Activated CD4-positive, alpha-beta memory T cell treated with anti-CD3 and anti-CD28 coated beads for 36 hours (primary cell): ENCODE measurements at regions of chr1 and their contacts with region 1.

Region 1: DNA sequence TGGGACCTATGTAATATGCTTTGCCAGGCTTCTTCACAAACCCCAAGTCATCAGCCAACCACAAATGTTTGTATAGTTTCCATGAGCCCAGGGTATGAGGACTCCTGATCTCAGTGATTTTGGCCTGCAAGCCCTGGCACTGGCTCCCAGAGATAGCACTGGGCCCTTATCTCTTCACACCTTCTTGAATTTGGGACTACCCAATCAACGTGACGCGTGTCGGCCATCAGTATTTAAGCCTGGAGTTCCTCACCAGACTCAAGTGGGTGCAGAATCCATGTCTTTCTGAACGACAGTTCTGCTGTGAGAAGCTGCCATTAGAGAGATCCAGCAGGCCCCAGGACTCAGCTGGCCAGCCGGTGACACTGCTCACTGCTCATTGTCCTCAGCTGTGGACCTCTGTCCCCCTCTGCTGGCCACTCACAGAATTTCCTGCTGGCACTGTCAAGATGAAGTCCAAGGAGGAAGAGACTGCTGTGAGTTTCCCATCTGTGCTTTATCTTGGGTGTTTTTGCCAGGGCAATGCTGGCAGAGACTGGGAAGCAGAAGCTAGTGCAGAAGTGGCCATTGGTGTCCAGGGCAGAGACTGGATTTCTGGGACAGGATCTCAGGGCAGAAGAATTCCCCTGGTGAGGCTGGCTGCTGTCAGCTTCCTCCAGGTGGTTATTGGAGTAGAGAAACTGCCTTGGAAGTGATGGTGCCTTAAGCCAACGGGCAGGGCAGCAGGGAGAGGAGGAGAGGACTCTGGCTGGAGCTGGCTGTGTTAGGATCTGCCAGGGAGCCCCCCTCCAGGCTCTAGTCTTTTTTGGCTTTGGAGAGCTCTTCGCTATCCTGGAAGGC is 28.4 kb downstream of the TMCC2 start:
- DNase-seq: peak; percentile 92
- H3K4me3 Mint-ChIP-seq: no peak overlapping the region
- H3K27ac Mint-ChIP-seq: no peak overlapping the region
- H3K4me1 Mint-ChIP-seq: no peaks in the 10 kb centered on the region
- H3K27me3 Mint-ChIP-seq: peaks cover 4% of the 10 kb centered on the region

Region 2: GRCh38 chr1:204868340-204868700 is 387.8 kb before region 1 on chr1:
- CTCF ChIA-PET with region 1: no interaction called
- POLR2A ChIA-PET with region 1: no interaction called
- intact Hi-C with region 1: no loop called
- DNase-seq: no peak
- H3K4me3 Mint-ChIP-seq: no peak overlapping the region
- H3K27ac Mint-ChIP-seq: no peak overlapping the region
- H3K4me1 Mint-ChIP-seq: no peaks in the 10 kb centered on the region
- H3K27me3 Mint-ChIP-seq: peaks cover 16% of the 10 kb centered on the region

Region 3: DNA sequence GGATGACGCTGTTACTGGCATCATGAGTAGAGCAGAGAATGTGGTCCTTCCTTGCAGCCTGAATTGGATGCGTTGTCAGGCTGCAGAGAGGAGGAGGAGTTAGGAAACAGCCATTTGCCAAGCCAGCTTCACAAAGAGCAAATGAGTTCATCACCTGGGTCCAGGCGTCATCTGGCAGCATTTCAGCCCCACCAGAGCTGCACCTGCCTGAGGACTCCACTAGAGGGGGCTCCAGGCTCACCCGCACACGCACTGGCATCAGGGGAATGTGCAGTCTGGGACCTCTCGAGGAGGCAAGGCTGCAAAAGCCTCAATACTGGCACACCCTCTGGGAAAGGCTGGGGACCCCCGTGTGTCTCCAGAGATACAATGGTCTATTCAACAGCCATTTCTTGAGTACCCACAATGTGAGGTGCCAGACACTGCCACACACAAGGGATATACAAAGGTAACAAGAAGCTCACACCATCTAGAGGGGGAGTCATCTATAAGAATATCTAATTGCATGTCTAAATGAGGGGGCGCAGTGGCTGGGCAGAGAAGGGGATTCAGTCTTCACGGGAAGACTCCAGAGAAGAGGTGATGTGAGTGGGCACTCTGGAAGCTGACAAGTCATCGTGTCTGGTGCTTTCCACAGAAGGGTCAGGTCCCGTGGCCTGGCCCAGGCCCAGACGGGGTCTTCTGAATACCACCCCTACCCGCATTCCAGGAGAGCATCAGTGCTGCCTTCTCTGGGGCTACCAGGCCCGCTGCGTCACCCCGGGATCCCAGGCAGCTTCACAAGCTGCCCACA is 266.7 kb before region 1 on chr1:
- CTCF ChIA-PET with region 1: interaction called, 22 read pairs
- POLR2A ChIA-PET with region 1: no interaction called
- intact Hi-C with region 1: loop called (anchors 5 kb)
- DNase-seq: peak; percentile 75
- H3K4me3 Mint-ChIP-seq: no peak overlapping the region
- H3K27ac Mint-ChIP-seq: no peak overlapping the region
- H3K4me1 Mint-ChIP-seq: peaks cover 7% of the 10 kb centered on the region
- H3K27me3 Mint-ChIP-seq: peaks cover 2% of the 10 kb centered on the region

Region 4: DNA sequence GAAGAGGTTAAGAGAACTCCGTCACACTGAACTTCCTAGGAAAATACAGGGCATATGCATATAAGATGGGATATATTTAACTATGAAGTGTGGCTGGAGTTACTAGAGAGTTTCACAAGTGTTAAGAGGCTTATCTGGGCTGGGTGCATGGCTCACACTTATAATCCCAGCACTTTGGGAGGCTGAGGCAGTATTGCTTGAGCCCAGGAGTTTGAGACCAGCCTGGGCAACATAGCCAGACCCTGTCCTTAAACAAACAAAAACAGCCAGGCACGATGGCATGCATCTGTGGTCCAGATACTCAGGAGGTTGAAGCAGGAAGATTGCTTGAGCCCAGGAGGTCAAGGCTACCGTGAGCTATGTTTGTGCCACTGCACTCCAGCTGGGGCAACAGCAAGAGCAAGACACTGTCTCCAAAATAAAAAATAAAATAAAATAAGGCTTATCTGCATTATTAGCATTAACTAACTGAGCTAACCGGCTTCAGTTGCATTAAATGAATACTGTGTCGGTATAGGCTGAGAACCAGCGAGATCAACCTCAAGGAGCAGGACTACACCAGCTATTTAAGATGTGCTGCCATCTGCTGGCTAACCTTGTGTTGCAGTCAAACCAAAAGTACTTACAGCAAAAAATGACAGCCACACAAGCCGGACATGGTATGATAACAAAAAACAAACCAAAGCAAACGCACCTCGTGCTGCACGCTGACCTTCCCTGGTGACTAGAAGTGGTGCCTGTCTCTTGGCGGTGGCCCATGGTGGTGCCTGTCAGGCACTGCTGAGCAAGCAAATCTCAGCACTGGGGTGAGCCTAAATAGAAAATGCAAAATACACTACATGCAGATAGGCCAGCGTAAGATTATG is 114.7 kb before region 1 on chr1:
- CTCF ChIA-PET with region 1: interaction called, 40 read pairs
- POLR2A ChIA-PET with region 1: no interaction called
- intact Hi-C with region 1: loop called (anchors 5 kb)
- DNase-seq: peak; percentile 83
- H3K4me3 Mint-ChIP-seq: no peak overlapping the region
- H3K27ac Mint-ChIP-seq: no peak overlapping the region
- H3K4me1 Mint-ChIP-seq: peaks cover 4% of the 10 kb centered on the region
- H3K27me3 Mint-ChIP-seq: no peaks in the 10 kb centered on the region

Region 5: DNA sequence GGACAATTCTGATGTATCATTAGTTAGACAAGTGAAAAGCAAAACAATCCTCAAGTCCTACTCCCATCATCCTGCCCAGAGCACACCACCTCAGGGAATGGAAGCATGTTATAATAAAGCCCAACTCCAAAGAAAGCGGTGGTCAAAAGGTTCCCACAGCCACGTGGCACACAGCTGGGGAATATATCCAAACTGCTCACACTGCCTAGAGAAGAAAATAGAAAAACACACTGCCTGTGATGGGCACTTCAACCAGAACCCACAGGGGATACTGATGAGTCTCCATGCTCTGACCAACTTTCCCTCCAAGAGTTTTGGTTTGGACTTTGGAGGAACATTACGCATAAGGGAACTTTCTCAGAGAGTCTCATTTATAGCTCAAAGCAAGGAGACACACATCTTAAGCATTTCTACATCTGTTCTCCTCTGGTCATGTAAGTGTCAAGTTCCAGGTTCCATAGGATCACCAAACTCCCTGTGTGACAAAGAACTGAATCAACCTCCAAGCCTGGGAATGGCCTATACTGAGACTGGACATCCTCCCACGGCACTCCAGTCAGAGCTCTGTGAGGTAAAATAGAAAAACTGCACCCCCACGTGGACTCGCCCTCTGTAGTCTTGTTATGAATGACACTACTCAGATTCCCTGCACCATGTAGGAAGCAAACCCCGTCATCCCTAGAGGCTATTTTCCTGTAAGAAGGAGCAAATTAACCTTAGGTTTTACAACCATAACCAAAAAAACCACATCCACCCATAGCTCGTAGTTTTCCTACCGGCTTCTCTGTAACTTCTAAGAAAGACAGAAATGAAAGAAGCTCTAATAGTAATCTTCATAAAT is 56.9 kb before region 1 on chr1:
- CTCF ChIA-PET with region 1: interaction called, 26 read pairs
- POLR2A ChIA-PET with region 1: no interaction called
- intact Hi-C with region 1: no loop called
- DNase-seq: peak; percentile 69
- H3K4me3 Mint-ChIP-seq: peak overlapping the region; percentile 54
- H3K27ac Mint-ChIP-seq: peak overlapping the region; percentile 82
- H3K4me1 Mint-ChIP-seq: peaks cover 53% of the 10 kb centered on the region
- H3K27me3 Mint-ChIP-seq: no peaks in the 10 kb centered on the region

Region 6: DNA sequence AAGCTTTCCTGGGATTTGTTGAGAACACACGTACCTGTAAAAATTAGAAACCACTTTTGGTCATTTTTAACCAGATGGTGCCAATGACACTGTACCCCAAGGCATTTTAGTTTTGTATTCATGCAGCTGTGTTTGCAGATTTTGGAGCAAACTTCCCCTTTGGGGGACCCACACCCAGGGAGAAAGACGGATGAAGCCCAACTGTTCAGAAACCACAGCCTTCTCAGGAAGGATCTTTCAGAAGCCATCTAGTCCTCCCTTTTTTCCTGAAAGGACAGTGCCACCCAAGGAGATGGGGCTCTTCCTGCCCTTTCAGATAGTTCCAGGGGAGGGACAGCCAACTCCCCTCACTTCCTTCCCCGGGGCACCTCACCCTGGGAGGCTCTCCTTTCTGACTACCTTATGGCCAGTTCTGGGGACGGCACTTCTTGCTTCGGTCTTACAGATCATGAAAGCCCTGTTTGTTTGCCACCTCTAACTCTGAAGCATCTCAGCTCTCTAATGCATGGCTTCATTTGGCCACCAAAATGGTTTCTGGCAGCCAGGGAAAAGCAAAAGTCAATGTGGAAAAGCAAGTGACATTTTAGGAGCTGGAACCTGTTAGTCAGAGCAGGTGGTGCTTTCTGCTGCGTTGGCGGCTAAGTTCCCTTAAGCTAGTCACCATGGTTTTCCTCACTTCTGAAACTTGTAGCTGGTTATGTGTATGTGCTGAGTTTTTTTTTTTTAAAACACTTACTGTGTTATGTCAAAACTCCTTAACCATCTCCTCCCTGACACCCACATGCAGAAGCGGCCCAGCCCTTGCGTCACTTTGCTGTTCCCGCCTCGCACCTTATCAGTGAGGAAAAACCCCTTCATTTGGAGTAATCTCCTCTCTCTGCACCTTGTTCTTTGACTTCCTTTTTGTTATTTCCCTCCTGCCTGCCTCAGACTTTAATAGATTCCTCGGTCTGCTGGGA is 18.4 kb before region 1 on chr1:
- CTCF ChIA-PET with region 1: interaction called, 338 read pairs
- POLR2A ChIA-PET with region 1: interaction called, 4 read pairs
- intact Hi-C with region 1: no loop called
- DNase-seq: peak; percentile 77
- H3K4me3 Mint-ChIP-seq: peak overlapping the region; percentile 50
- H3K27ac Mint-ChIP-seq: peak overlapping the region; percentile 92
- H3K4me1 Mint-ChIP-seq: peaks cover 41% of the 10 kb centered on the region
- H3K27me3 Mint-ChIP-seq: peaks cover 5% of the 10 kb centered on the region

Region 7: GRCh38 chr1:205422993-205423625 is 166.9 kb after region 1 on chr1:
- CTCF ChIA-PET with region 1: no interaction called
- POLR2A ChIA-PET with region 1: no interaction called
- intact Hi-C with region 1: no loop called
- DNase-seq: no peak
- H3K4me3 Mint-ChIP-seq: no peak overlapping the region
- H3K27ac Mint-ChIP-seq: no peak overlapping the region
- H3K4me1 Mint-ChIP-seq: no peaks in the 10 kb centered on the region
- H3K27me3 Mint-ChIP-seq: peaks cover 17% of the 10 kb centered on the region